HCT116 (cell line): ENCODE measurements at regions of chr20 and their contacts with region 1.

Region 1: DNA sequence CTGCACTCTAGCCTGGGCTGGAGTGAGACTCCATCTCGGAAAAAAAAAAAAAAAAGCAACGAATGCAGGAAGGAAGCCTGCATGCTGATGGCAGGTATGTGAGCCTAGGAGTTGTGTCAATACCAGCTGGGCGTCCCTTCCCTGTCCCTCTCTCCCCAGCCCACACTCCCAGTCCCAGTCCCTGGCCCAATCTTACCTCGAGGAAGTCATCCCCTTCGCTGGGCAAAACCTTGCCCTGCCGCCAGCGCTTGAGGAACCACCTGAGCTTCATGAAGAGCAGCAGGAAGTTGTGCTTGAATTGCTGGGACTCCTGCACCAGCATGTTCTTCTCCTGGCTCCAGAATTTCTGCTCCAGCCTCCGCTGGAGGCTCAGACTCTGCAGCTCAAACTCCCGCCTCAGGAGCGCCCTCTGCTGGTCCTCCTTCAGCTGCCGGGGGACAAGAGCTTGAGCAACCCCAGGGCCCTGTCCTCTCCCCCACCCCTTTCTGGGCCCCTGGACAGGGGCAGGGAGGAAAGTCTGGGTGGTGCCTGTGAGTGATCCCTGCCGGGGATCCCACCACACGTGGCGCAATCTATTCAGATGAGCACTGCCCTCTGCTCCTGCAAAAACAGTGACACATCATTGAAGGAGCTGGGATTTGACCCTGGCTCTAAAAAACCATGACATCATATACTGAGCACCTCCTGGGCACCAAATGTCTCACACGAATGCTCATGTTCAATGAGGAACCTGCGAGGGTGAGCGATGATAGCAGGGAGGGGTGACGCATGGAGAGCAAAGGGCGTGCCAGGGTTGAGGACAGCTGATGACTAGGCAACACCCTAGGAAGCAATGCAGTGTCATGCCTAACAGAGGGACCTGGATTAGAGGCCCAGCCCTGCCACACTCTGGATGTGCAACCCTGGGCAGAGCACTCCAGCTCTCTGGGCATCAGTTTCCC is 35.0 kb upstream of the DSN1 start:
- DNase-seq: peak; percentile 42
- ATAC-seq: peak; percentile 83
- H3K4me3 ChIP-seq: no peak overlapping the region
- H3K27ac ChIP-seq: no peak overlapping the region
- H3K4me1 ChIP-seq: peaks cover 0 to 9% of the 10 kb centered on the region in 2 experiments; a peak in 1 of 4 replicates
- H3K27me3 ChIP-seq: no peaks in the 10 kb centered on the region
- CTCF ChIP-seq: peak; percentile 38 to 97 (median 95); a peak in 5 of 6 replicates
- POLR2A ChIP-seq: no peak
- RAD21 ChIP-seq: peak; percentile 52

Region 2: GRCh38 chr20:36377352-36378326 is 430.9 kb before region 1 on chr20:
- CTCF ChIA-PET with region 1: no interaction called
- POLR2A ChIA-PET with region 1: no interaction called
- RAD21 ChIA-PET with region 1: no interaction called
- intact Hi-C with region 1: no loop called
- DNase-seq: no peak
- ATAC-seq: no peak
- H3K4me3 ChIP-seq: no peak overlapping the region
- H3K27ac ChIP-seq: no peak overlapping the region
- H3K4me1 ChIP-seq: no peaks in the 10 kb centered on the region
- H3K27me3 ChIP-seq: peaks cover 25% of the 10 kb centered on the region
- CTCF ChIP-seq: no peak
- POLR2A ChIP-seq: no peak
- RAD21 ChIP-seq: no peak

Region 3: DNA sequence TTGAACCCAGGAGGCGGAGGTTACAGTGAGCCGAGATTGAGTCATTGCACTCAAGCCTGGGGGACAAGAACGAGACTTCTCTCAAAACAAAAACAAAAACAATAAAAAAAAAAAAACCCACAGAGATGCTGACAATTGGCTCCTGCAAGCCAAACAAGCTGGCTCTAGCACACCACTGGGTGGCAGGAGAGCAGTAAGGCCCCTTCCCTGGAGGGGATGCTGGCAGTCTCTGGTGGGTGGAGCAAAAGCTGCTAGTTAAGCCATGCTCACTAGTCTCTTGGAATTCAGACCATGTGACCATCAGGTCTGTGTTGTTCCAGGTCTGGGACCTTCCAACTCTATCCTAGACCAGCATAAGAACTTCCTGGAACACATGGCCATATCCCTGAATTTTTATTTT is 16.2 kb before region 1 on chr20:
- CTCF ChIA-PET with region 1: interaction called, 12 read pairs
- POLR2A ChIA-PET with region 1: interaction called, 4 read pairs
- RAD21 ChIA-PET with region 1: interaction called in 1 of 2 experiments, 3 read pairs
- intact Hi-C with region 1: no loop called
- DNase-seq: peak; percentile 57
- ATAC-seq: peak; percentile 99
- H3K4me3 ChIP-seq: no peak overlapping the region
- H3K27ac ChIP-seq: no peak overlapping the region
- H3K4me1 ChIP-seq: peaks cover 0 to 2% of the 10 kb centered on the region in 2 experiments; a peak in 1 of 4 replicates
- H3K27me3 ChIP-seq: no peaks in the 10 kb centered on the region
- CTCF ChIP-seq: peak; percentile 45 to 67 (median 52); a peak in 5 of 6 replicates
- POLR2A ChIP-seq: no peak
- RAD21 ChIP-seq: peak; percentile 51

Region 4: DNA sequence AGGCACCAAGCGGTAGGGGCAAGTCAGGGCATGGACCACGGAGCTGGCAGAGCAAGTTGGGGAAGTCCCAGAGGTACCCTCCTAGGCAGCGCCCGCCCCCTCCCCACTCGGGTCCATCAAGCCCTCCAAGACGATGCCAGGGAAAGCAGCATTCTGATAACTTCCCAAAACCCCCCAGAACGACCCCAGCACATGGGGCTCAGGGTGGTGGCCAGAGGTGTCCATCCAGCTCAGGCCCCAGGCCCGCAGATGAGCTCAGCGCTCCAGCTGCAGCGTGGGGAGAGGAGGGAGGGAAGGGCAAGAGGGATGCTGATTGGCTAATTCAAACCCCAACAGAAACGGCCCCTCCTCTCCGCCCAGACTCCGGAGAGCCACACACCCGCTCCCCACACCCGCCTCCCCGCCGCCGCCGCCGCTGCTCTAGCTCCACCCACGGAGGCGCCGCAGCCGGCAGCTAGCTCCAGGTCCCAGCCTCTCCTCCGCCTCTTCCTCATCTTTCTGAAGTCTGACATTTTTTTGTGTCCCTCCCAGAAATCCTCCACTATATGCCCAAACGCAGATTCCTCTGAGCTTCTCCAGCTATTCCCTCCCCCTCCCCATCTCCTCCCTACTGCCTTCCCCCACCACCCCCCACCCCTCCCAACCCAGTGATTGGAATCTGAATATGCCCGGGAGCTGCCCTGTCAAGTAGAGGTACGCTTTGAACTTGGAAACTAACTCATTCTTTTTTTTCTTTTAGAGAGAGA is 27.0 kb after region 1 on chr20:
- CTCF ChIA-PET with region 1: interaction called, 14 read pairs
- POLR2A ChIA-PET with region 1: interaction called, 3 read pairs
- RAD21 ChIA-PET with region 1: no interaction called
- intact Hi-C with region 1: no loop called
- DNase-seq: peak; percentile 80
- ATAC-seq: peak; percentile 90
- H3K4me3 ChIP-seq: peak overlapping the region; percentile 44 to 53
- H3K27ac ChIP-seq: peak overlapping the region; percentile 85
- H3K4me1 ChIP-seq: peaks cover 39 to 59% of the 10 kb centered on the region in 2 experiments
- H3K27me3 ChIP-seq: no peaks in the 10 kb centered on the region
- CTCF ChIP-seq: no peak
- POLR2A ChIP-seq: peak; percentile 24
- RAD21 ChIP-seq: no peak

Region 5: DNA sequence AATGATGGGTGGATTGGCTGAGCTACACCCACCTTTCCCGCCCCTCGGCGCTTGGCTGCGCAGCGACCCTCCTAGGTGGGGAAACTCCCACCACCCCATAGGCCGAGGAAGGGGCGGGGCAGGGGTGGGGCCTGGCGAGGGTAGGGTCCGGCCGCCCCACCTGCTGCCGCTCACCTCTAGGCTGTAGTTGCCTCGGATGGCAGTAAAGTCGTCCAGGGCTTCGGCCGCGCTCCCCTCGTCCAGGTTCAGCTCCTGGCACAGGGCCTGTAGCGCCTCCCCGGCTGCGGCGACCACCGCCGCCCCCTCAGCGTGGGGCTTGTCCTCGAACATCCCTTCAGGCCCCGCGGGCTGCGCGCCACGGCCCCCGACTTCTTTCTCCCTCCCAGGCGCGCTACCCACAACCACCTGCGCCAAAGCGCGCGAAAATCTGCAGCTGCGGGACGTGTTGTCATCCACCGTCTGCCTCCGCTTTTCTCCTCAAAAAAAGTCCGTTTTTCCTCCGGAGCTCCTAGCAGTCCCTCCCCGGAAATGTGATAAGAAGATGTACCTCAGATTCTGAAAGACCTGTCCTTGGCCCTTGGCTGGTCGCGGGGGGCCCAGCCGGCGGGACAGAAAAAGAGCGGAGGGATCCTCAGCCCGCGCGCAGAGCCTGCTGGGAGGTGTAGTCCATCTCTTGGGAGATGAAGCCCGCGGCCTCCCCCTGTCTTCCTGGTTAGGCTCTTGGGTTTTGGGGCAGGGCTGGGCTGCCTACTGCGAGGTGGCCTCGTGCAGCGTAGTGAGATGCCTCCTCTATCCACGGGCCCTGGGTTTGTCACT is 287.2 kb after region 1 on chr20 and contains the start of gene RBL1:
- CTCF ChIA-PET with region 1: no interaction called
- POLR2A ChIA-PET with region 1: no interaction called
- RAD21 ChIA-PET with region 1: no interaction called
- intact Hi-C with region 1: no loop called
- DNase-seq: peak; percentile 85
- ATAC-seq: peak; percentile 87
- H3K4me3 ChIP-seq: peak within 1 kb of the TSS; percentile 74 to 91
- H3K27ac ChIP-seq: peak within 1 kb of the TSS; percentile 74
- H3K4me1 ChIP-seq: peaks cover 14 to 20% of the 10 kb centered on the region in 2 experiments
- H3K27me3 ChIP-seq: no peaks in the 10 kb centered on the region
- CTCF ChIP-seq: peak in 1 of 3 experiments; percentile 46; a peak in 2 of 6 replicates
- POLR2A ChIP-seq: peak; percentile 52
- RAD21 ChIP-seq: no peak
- total RNA-seq, gene RBL1: 16.9 TPM

Region 6: DNA sequence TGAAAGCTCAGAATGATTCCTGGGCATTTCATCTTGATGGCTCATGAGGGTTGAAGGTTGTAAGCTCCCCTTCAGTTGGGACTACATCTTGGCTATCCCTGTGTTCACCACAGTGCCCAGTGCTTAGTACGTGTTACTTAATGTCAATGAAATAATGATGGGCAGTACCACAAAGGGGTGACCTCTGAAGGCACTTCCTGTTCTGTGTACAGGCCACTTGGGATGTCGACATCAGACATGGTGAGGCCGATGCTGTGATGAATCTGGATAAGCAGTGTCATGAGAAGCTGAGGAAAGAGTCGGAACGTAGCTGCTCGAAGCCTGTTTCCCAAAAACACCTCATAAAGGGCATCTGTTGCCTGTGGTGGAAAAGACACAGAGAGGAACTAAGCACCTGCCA is 314.9 kb after region 1 on chr20:
- CTCF ChIA-PET with region 1: no interaction called
- POLR2A ChIA-PET with region 1: no interaction called
- RAD21 ChIA-PET with region 1: no interaction called
- intact Hi-C with region 1: no loop called
- DNase-seq: no peak
- ATAC-seq: no peak
- H3K4me3 ChIP-seq: no peak overlapping the region
- H3K27ac ChIP-seq: no peak overlapping the region
- H3K4me1 ChIP-seq: no peaks in the 10 kb centered on the region
- H3K27me3 ChIP-seq: no peaks in the 10 kb centered on the region
- CTCF ChIP-seq: no peak
- POLR2A ChIP-seq: no peak
- RAD21 ChIP-seq: no peak